Transverse colon (tissue), 4 donors: ENCODE measurements at regions of chr12 and their contacts with region 1.

Region 1: GRCh38 chr12:4857472-4858291 is 52.0 kb upstream of the KCNA1 start:
- DNase-seq: peak; percentile 80
- H3K4me3 ChIP-seq: peak overlapping the region in 1 of 4 donors; percentile 19
- H3K27ac ChIP-seq: no peak overlapping the region
- H3K4me1 ChIP-seq: peaks cover 7 to 15% (median 10%) of the 10 kb centered on the region in 4 donors
- H3K27me3 ChIP-seq: peaks cover 38% of the 10 kb centered on the region
- CTCF ChIP-seq: peak; percentile 77 to 87 (median 85)
- EP300 ChIP-seq: no peak
- POLR2A ChIP-seq: no peak

Region 2: DNA sequence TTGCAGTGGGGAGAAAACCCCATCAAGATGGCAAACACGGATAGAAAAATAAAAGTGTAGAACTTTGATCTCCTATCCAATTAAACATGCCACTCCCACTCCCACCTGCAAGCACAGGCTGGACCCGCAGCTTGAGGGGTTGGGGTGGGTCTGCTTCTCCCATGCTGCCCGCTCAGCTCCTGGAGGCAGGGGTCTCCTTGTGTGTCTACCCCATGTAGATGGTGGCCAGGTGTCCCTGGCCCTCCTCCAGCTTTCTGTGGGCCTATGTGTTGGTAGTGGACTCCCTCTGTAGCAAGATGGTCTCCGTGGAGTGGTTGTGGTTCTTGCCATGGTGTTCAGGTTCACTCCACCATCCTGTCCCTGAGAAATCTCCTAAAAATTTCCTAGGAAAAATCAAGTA is 454.7 kb before region 1 on chr12:
- in situ Hi-C with region 1: no loop called
- intact Hi-C with region 1: no loop called
- DNase-seq: no peak
- H3K4me3 ChIP-seq: no peak overlapping the region
- H3K27ac ChIP-seq: no peak overlapping the region
- H3K4me1 ChIP-seq: no peaks in the 10 kb centered on the region
- H3K27me3 ChIP-seq: peaks cover 6% of the 10 kb centered on the region
- CTCF ChIP-seq: no peak
- EP300 ChIP-seq: no peak
- POLR2A ChIP-seq: no peak

Region 3: GRCh38 chr12:4909734-4910501 is 52.2 kb after region 1 on chr12 and contains the start of gene KCNA1:
- in situ Hi-C with region 1: no loop called
- intact Hi-C with region 1: loop called (anchors 10 kb)
- DNase-seq: no peak
- H3K4me3 ChIP-seq: peak within 1 kb of the TSS; percentile 7 to 57 (median 26)
- H3K27ac ChIP-seq: no peak within 1 kb of the TSS
- H3K4me1 ChIP-seq: peaks cover 0 to 27% (median 14%) of the 10 kb centered on the region in 4 donors
- H3K27me3 ChIP-seq: peaks cover 97% of the 10 kb centered on the region
- CTCF ChIP-seq: no peak
- EP300 ChIP-seq: no peak
- POLR2A ChIP-seq: no peak
- total RNA-seq, gene KCNA1: 0.32 to 0.75 (median 0.41) TPM in 3 of 4 donors, not detected in the other

Region 4: GRCh38 chr12:4997939-4998338 is 140.3 kb after region 1 on chr12:
- in situ Hi-C with region 1: loop called (anchors 5 to 10 kb)
- intact Hi-C with region 1: loop called (anchors 2 kb)
- DNase-seq: no peak
- H3K4me3 ChIP-seq: no peak overlapping the region
- H3K27ac ChIP-seq: peak overlapping the region in 2 of 4 donors; percentile 35 to 39
- H3K4me1 ChIP-seq: peaks cover 0 to 3% (median 0%) of the 10 kb centered on the region in 4 donors
- H3K27me3 ChIP-seq: peaks cover 31% of the 10 kb centered on the region
- CTCF ChIP-seq: no peak
- EP300 ChIP-seq: no peak
- POLR2A ChIP-seq: no peak

Region 5: DNA sequence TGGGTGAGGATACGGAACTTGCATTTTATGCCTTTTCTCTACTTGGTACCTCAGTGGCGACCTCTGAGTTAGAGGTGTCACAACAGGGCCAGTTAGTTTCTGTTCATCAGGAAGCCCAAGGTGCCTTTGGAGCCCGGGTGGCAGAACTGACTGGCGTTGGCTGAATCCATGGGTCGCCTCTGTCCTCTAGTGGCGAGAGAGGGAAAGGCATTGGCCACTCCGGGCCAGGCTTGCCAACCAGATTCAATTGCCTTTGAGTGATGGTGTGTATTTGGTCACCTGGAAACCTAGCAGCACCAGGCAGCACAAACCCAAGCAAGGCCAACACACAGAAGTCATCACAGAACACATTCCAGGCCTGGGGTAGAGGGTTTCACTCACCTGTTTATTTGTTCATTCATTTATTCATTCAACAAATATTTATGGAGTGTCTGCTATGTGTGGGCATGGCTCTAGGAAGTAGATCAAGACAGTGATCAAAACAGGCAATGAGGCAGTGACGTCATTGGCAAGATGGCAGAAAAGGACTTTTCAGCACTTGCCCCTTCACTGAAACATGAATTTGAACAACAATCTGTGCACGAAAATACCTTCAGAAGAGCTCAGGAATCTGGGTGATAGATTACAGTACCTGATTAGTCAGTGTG is 145.5 kb after region 1 on chr12:
- in situ Hi-C with region 1: loop called (anchors 5 to 10 kb)
- intact Hi-C with region 1: loop called (anchors 2 kb)
- DNase-seq: peak; percentile 68
- H3K4me3 ChIP-seq: no peak overlapping the region
- H3K27ac ChIP-seq: no peak overlapping the region
- H3K4me1 ChIP-seq: peaks cover 0 to 2% (median 0%) of the 10 kb centered on the region in 4 donors
- H3K27me3 ChIP-seq: peaks cover 12% of the 10 kb centered on the region
- CTCF ChIP-seq: peak; percentile 89 to 93 (median 91)
- EP300 ChIP-seq: no peak
- POLR2A ChIP-seq: no peak

Region 6: DNA sequence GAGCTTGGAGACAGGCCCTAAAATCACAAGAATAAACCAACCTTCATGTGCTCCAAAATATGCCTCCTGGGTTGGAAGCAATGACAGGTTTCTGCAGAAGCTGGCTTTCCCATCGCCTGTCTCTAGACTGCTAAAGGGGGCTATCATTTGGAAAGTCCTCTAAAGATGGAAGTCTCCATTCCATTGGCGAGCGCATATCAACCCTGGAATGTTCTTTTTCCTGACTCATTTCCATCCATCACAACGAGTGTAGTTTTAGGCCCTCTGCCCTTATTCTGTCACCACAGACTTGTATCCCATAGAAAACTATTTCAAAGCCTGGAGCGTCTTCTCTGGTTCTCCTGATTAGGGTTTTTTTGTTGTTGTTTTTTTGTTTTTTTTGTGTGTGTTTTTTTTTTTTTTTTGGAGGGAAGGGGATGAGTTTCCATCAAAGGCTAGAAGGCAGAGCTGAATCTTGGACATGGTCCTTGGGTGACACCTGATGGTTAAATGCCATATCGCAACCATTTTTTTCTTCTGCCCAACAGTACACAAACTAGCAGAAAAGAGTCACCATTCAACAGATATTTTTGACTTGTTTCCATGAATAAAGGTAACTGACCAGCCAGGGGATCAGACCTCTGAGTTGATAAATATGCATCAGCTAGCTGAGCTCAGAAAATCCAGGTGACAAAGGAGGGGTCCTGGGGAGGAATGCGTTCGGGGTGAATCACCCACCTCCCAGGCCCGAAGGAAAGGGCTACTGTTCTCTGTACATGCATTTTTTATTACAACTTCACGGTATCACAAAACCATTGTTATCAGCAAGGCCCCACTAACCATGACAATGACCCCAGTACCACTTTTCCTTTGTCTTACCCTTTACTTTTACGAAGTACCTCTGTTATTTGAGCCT is 226.5 kb after region 1 on chr12:
- in situ Hi-C with region 1: no loop called
- intact Hi-C with region 1: loop called (anchors 10 kb)
- DNase-seq: no peak
- H3K4me3 ChIP-seq: no peak overlapping the region
- H3K27ac ChIP-seq: no peak overlapping the region
- H3K4me1 ChIP-seq: no peaks in the 10 kb centered on the region
- H3K27me3 ChIP-seq: peaks cover 3% of the 10 kb centered on the region
- CTCF ChIP-seq: peak; percentile 58 to 65 (median 62)
- EP300 ChIP-seq: no peak
- POLR2A ChIP-seq: no peak

Region 7: DNA sequence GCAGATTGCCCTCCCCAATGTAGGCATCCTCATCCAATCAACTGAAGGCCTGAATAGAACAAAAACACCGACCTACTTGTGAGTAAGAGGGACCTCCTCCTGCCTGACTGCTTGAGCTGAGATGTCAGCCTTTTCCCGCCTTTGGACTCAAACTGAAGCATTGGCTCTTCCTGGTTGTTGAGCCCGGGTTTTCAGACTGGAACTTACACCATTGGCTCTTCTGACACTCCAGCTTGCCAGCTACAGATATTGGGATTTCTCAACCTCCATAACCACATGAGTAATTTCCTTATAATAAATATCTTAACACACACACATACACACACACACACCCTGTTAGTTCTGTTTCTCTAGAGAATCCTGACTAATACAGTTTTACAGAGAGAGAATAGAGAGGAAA is 400.8 kb after region 1 on chr12:
- in situ Hi-C with region 1: no loop called
- intact Hi-C with region 1: no loop called
- DNase-seq: no peak
- H3K4me3 ChIP-seq: no peak overlapping the region
- H3K27ac ChIP-seq: no peak overlapping the region
- H3K4me1 ChIP-seq: peaks cover 0 to 21% (median 3%) of the 10 kb centered on the region in 4 donors
- H3K27me3 ChIP-seq: no peaks in the 10 kb centered on the region
- CTCF ChIP-seq: no peak
- EP300 ChIP-seq: no peak
- POLR2A ChIP-seq: no peak